ENCODE measurements at regions of chr1 and their contacts with region 1.

Region 1: GRCh38 chr1:223133824-223134435 is 9.1 kb downstream of the TLR5 start:
- DNase-seq: peak; percentile 85 to 97 (median 90)
- ATAC-seq: peak; percentile 94
- H3K4me3 ChIP-seq: peak overlapping the region; percentile 29 to 35
- H3K27ac ChIP-seq: peak overlapping the region; percentile 74 to 81
- H3K4me1 ChIP-seq: peaks cover 13 to 72% of the 10 kb centered on the region in 2 donors
- H3K27me3 ChIP-seq: no peaks in the 10 kb centered on the region
- CTCF ChIP-seq: peak; percentile 94 to 95

Region 2: GRCh38 chr1:222792744-222793143 is 341.2 kb before region 1 on chr1:
- intact Hi-C with region 1: loop called in 1 of 2 experiments (anchors 10 kb)
- DNase-seq: no peak
- ATAC-seq: peak; percentile 56
- H3K4me3 ChIP-seq: no peak overlapping the region
- H3K27ac ChIP-seq: no peak overlapping the region
- H3K4me1 ChIP-seq: no peaks in the 10 kb centered on the region
- H3K27me3 ChIP-seq: no peaks in the 10 kb centered on the region
- CTCF ChIP-seq: peak; percentile 22 to 43

Region 3: DNA sequence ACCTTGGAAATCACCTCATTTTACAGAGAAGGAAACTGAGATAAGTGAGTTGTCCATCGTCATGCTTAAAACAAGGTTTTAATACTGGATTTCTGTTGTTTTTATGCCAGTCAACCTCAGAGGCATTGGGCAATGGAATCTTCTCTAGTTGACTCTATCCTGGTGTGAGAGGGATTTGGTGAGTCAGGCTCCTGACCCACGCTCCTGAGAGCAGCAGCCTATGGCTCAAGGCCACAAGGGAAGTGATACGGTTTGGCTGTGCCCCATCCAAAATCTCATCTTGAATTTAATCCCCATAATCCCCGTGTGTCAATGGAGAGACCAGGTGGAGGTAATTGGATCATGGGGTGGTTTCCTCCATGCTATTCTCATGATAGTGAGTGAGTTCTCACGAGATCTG is 81.0 kb before region 1 on chr1:
- intact Hi-C with region 1: no loop called
- DNase-seq: no peak
- ATAC-seq: no peak
- H3K4me3 ChIP-seq: no peak overlapping the region
- H3K27ac ChIP-seq: no peak overlapping the region
- H3K4me1 ChIP-seq: no peaks in the 10 kb centered on the region
- H3K27me3 ChIP-seq: no peaks in the 10 kb centered on the region
- CTCF ChIP-seq: no peak

Region 4: DNA sequence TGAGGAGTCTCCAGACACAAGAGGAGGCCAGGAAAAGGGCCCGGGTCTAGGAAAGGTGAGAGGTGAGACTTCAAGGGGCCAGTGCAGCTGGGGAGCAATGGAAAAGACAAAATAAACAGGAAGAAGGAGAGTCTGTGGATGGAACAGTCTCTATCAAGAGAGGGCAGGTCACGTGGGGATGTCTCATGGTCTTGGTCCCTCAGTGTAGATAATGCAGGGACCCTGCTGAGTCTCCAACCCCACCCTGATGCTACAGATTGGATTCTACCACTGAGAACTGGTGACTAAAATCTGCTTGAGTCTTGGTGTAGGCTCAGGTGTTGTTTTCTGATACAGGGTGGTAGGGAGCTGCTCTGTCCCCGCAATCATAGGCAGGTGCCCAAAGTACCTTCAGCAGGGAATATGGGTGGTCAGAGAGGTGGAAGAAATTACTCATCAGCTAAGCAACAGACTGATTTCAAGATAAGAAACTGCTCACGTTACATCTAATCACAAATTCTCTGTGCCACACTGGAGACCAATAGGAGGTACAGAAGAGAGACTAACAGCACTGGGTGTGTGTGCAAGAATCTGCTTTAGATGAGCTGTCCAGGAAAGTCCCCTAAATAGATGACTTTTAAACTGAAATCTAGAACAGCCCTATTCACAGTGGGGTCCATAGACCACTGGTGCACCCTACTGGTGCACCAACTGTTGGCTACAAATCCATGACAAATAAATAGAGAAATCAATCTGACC is 110.6 kb after region 1 on chr1:
- intact Hi-C with region 1: loop called in 1 of 2 experiments (anchors 10 kb)
- DNase-seq: no peak
- ATAC-seq: peak; percentile 64
- H3K4me3 ChIP-seq: no peak overlapping the region
- H3K27ac ChIP-seq: no peak overlapping the region
- H3K4me1 ChIP-seq: no peaks in the 10 kb centered on the region
- H3K27me3 ChIP-seq: no peaks in the 10 kb centered on the region
- CTCF ChIP-seq: no peak

Region 5: GRCh38 chr1:223683586-223684487 is 549.9 kb after region 1 on chr1:
- intact Hi-C with region 1: loop called in 1 of 2 experiments (anchors 5 kb)
- DNase-seq: peak in 2 of 4 donors; percentile 65 to 73
- ATAC-seq: peak; percentile 88
- H3K4me3 ChIP-seq: no peak overlapping the region
- H3K27ac ChIP-seq: no peak overlapping the region
- H3K4me1 ChIP-seq: no peaks in the 10 kb centered on the region
- H3K27me3 ChIP-seq: peaks cover 0 to 10% of the 10 kb centered on the region in 2 donors
- CTCF ChIP-seq: peak; percentile 33 to 52

Measured in left lung (tissue), 14 donors.